Calu3 (cell line): ENCODE measurements at regions of chr21 and their contacts with region 1.

Region 1: DNA sequence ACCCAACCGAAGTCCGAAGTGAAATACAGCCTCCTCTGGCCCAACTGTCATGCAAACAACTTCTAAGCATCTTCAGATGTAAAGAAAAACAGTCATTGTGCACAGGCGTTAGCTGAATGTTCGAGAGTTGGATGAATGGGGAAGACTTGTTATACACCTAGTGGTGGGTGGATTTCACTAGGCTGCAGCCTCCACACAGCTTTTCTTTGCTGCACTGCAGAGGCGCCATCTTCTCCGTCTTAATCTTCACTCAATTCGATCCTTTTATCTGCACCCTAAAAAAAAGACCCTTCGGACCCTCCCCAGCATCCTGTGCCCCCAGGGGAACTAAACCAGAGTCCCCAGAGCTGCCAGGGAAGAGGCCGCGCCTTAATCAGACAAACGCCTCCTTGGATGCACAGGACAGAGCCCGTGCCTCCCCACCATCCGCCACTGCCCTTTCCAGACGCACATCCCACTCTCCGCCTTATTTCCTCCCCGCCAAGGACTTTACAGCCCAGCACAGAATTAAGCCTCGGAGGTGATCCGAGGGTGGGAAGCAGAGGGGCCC is 1.4 kb downstream of the APP start:
- DNase-seq: peak; percentile 40
- H3K4me3 Mint-ChIP-seq: peak overlapping the region; percentile 93
- H3K27ac Mint-ChIP-seq: peak overlapping the region; percentile 53
- H3K4me1 Mint-ChIP-seq: peaks cover 27% of the 10 kb centered on the region
- H3K27me3 Mint-ChIP-seq: no peaks in the 10 kb centered on the region
- CTCF ChIP-seq: peak; percentile 17

Region 2: DNA sequence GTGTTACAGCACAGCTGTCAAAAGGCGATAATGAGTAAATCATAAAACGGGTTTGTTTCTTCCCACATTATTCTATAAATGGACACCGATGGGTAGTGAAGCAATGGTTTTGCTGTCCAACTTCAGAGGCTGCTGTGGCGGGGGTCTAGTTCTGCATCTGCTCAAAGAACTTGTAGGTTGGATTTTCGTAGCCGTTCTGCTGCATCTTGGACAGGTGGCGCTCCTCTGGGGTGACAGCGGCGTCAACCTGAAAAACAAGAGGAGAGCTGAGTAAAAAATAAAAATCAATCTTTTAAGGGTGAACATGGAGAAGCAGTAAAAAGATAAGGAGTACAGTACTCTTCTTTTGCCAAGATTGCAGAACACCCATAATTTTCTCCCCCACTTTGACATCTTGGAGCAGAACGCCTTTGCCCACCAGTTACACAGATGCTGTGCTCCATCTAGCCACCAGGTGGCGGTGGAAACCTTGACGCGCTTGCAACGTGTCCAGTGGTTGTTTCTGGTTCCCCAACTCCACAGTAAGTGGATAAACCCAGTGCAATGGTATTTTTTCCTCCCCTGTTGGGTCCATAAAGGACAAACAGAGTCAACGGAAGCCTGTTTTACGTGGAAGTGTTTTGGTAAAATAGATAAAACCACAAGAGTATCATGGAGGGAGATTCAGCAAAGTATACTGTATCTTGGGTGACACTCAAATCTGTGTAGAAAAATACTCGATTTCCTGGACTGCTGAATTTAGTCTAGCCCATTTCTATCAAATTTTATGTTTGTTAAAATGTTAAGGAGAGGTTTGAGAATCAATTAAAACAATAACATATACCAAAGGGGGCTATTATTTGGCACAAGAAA is 287.4 kb before region 1 on chr21:
- CTCF ChIA-PET with region 1: no interaction called
- intact Hi-C with region 1: loop called (anchors 5 kb)
- DNase-seq: peak; percentile 54
- H3K4me3 Mint-ChIP-seq: no peak overlapping the region
- H3K27ac Mint-ChIP-seq: no peak overlapping the region
- H3K4me1 Mint-ChIP-seq: peaks cover 6% of the 10 kb centered on the region
- H3K27me3 Mint-ChIP-seq: no peaks in the 10 kb centered on the region
- CTCF ChIP-seq: peak; percentile 83

Region 3: GRCh38 chr21:25997788-25998611 is 171.1 kb before region 1 on chr21:
- CTCF ChIA-PET with region 1: no interaction called
- intact Hi-C with region 1: loop called (anchors 10 kb)
- DNase-seq: peak; percentile 55
- H3K4me3 Mint-ChIP-seq: peak overlapping the region; percentile 8
- H3K27ac Mint-ChIP-seq: peak overlapping the region; percentile 92
- H3K4me1 Mint-ChIP-seq: peaks cover 29% of the 10 kb centered on the region
- H3K27me3 Mint-ChIP-seq: no peaks in the 10 kb centered on the region
- CTCF ChIP-seq: no peak

Region 4: DNA sequence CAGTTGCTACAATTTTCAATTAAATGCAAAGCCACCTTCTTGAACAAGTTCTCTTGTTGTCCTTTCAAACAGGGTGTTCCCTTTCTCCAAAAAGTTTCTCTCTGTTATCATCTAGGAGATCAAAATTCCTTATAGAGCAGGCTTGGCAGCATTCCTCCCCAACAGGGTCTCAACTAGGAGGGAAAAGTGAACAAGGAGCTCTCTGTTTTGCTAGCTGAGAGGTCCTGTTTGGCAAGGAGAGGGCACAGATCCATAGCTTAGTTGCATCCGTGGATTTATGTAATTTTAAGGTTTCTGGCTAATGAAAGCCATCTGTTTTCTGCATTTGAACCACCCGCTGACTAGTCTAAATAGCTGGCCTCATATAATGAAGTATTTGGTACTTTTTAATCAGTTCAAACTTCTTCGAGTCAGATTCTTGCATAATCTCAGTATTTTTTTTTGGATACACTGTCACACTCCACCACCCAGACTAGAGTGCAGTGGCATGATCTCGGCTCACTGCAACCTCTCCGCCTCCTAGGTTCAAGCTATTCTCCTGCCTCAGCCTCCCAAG is 52.6 kb before region 1 on chr21:
- CTCF ChIA-PET with region 1: interaction called, 3 read pairs
- intact Hi-C with region 1: loop called (anchors 2 kb)
- DNase-seq: peak; percentile 50
- H3K4me3 Mint-ChIP-seq: peak overlapping the region; percentile 14
- H3K27ac Mint-ChIP-seq: no peak overlapping the region
- H3K4me1 Mint-ChIP-seq: peaks cover 18% of the 10 kb centered on the region
- H3K27me3 Mint-ChIP-seq: no peaks in the 10 kb centered on the region
- CTCF ChIP-seq: no peak

Region 5: DNA sequence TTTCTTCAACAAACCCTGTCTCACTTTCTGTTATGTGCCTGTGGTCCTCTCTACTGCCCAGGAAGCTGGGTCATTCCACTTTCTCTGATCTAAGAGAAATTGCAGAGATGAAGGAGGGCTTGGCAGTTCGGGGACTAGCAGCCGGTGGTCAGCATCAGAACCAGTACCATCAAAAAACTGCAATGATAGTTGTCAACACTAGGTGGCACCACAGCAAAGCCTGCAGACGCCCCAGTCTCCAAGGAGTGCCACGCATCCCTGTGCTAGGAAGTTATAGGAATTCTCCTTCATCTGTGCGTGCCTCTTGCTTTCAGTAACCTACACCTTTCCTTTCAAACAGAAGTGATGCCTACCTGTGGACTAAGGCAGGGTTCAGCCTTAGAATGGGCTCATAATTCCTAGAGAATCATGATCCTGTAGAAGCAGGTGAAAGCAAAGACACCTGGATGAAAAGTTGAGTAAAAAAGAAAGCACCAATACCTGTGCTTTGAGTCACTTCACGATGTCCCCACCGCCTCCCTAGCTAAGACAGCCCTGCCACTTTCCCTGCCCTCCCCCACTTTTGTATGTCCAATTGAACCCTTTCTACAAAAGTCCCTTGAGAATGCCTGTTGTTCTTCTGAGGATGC is 546.9 kb after region 1 on chr21:
- CTCF ChIA-PET with region 1: no interaction called
- intact Hi-C with region 1: loop called (anchors 10 kb)
- DNase-seq: peak; percentile 46
- H3K4me3 Mint-ChIP-seq: no peak overlapping the region
- H3K27ac Mint-ChIP-seq: no peak overlapping the region
- H3K4me1 Mint-ChIP-seq: no peaks in the 10 kb centered on the region
- H3K27me3 Mint-ChIP-seq: no peaks in the 10 kb centered on the region
- CTCF ChIP-seq: peak; percentile 53